ENCODE measurements at regions of chr12 and their contacts with region 1.

Region 1: GRCh38 chr12:89756585-89757321 is 48.1 kb upstream of the ATP2B1 start:
- DNase-seq: peak; percentile 69
- ATAC-seq: peak; percentile 78
- H3K4me3 ChIP-seq: no peak overlapping the region
- H3K4me3 Mint-ChIP-seq: peak overlapping the region; percentile 33
- H3K27ac ChIP-seq: peak overlapping the region; percentile 14 to 67
- H3K27ac Mint-ChIP-seq: peak overlapping the region; percentile 92
- H3K4me1 ChIP-seq: peaks cover 44 to 47% of the 10 kb centered on the region in 2 donors
- H3K4me1 Mint-ChIP-seq: peaks cover 55% of the 10 kb centered on the region
- H3K27me3 ChIP-seq: no peaks in the 10 kb centered on the region
- H3K27me3 Mint-ChIP-seq: no peaks in the 10 kb centered on the region
- CTCF ChIP-seq: no peak

Region 2: GRCh38 chr12:89352492-89353187 is 404.1 kb before region 1 on chr12 and contains the start of gene DUSP6:
- CTCF ChIA-PET with region 1: no interaction called
- POLR2A ChIA-PET with region 1: no interaction called
- intact Hi-C with region 1: loop called (anchors 5 kb)
- DNase-seq: peak; percentile 88
- ATAC-seq: peak; percentile 64
- H3K4me3 ChIP-seq: peak within 1 kb of the TSS; percentile 63 to 94 (median 78)
- H3K4me3 Mint-ChIP-seq: peak within 1 kb of the TSS; percentile 97
- H3K27ac ChIP-seq: peak within 1 kb of the TSS; percentile 82 to 87
- H3K27ac Mint-ChIP-seq: peak within 1 kb of the TSS; percentile 96
- H3K4me1 ChIP-seq: peaks cover 44 to 52% of the 10 kb centered on the region in 2 donors
- H3K4me1 Mint-ChIP-seq: peaks cover 68% of the 10 kb centered on the region
- H3K27me3 ChIP-seq: no peaks in the 10 kb centered on the region
- H3K27me3 Mint-ChIP-seq: no peaks in the 10 kb centered on the region
- CTCF ChIP-seq: no peak
- total RNA-seq, gene DUSP6: 1.6 and 3.2 TPM in 2 replicates

Region 3: GRCh38 chr12:89671469-89671868 is 85.3 kb before region 1 on chr12:
- CTCF ChIA-PET with region 1: no interaction called
- POLR2A ChIA-PET with region 1: no interaction called
- intact Hi-C with region 1: no loop called
- DNase-seq: no peak
- ATAC-seq: no peak
- H3K4me3 ChIP-seq: no peak overlapping the region
- H3K4me3 Mint-ChIP-seq: peak overlapping the region; percentile 18
- H3K27ac ChIP-seq: peak overlapping the region in 1 of 2 donors; percentile 50
- H3K27ac Mint-ChIP-seq: peak overlapping the region; percentile 47
- H3K4me1 ChIP-seq: peaks cover 38 to 80% of the 10 kb centered on the region in 2 donors
- H3K4me1 Mint-ChIP-seq: peaks cover 87% of the 10 kb centered on the region
- H3K27me3 ChIP-seq: no peaks in the 10 kb centered on the region
- H3K27me3 Mint-ChIP-seq: no peaks in the 10 kb centered on the region
- CTCF ChIP-seq: no peak

Region 4: DNA sequence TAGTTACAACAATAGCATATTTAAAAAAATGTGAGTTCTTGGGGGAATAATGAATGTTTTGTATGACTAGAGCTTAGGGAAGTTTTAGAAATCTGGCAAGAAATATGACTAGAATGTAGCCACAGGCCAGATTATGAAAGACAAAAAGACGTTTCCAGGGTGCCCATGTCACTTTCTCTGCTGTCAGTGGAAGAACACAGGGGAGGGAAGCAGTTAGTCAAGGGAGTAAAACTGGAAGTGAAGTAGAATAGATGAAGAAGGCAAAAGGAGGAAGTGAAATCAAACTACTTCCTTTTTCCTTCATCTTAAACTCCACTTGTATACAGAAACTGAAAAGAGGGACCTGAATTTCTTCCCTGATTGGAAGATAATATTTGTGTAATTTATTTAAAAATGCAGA is 33.1 kb after region 1 on chr12:
- CTCF ChIA-PET with region 1: no interaction called
- POLR2A ChIA-PET with region 1: no interaction called
- intact Hi-C with region 1: loop called (anchors 2 kb)
- DNase-seq: peak; percentile 83
- ATAC-seq: peak; percentile 95
- H3K4me3 ChIP-seq: no peak overlapping the region
- H3K4me3 Mint-ChIP-seq: peak overlapping the region; percentile 62
- H3K27ac ChIP-seq: peak overlapping the region; percentile 32 to 58
- H3K27ac Mint-ChIP-seq: peak overlapping the region; percentile 81
- H3K4me1 ChIP-seq: peaks cover 11% of the 10 kb centered on the region in 2 donors
- H3K4me1 Mint-ChIP-seq: peaks cover 27% of the 10 kb centered on the region
- H3K27me3 ChIP-seq: no peaks in the 10 kb centered on the region
- H3K27me3 Mint-ChIP-seq: no peaks in the 10 kb centered on the region
- CTCF ChIP-seq: no peak

Region 5: GRCh38 chr12:89862511-89863179 is 105.9 kb after region 1 on chr12:
- CTCF ChIA-PET with region 1: no interaction called
- POLR2A ChIA-PET with region 1: no interaction called
- intact Hi-C with region 1: loop called (anchors 1 kb)
- DNase-seq: peak; percentile 88
- ATAC-seq: peak; percentile 68
- H3K4me3 ChIP-seq: peak overlapping the region; percentile 23 to 65 (median 44)
- H3K4me3 Mint-ChIP-seq: peak overlapping the region; percentile 86
- H3K27ac ChIP-seq: peak overlapping the region; percentile 92 to 96
- H3K27ac Mint-ChIP-seq: peak overlapping the region; percentile 98
- H3K4me1 ChIP-seq: peaks cover 58 to 65% of the 10 kb centered on the region in 2 donors
- H3K4me1 Mint-ChIP-seq: peaks cover 68% of the 10 kb centered on the region
- H3K27me3 ChIP-seq: no peaks in the 10 kb centered on the region
- H3K27me3 Mint-ChIP-seq: no peaks in the 10 kb centered on the region
- CTCF ChIP-seq: no peak

Region 6: DNA sequence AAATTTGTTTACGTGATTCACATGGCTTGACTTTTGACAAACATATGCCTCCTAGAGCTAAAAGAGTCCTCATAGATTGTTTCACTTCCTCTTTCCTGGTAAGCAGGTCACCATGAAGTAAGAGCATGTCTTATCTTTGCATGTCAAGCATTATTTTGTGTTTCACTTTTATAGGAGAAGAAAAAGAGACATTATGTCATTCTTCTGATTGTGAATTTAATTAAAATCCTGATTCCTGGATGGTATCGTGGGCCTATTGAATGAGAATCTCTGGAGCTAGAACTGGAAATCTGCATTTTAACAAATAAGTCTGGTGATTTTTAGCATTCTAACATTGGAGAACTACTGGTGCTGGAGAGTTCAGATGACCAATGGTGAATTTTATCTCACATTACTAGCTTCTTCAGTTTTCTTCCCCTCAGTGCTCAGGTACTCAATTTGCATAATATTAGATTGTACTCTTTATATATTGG is 170.5 kb after region 1 on chr12:
- CTCF ChIA-PET with region 1: no interaction called
- POLR2A ChIA-PET with region 1: no interaction called
- intact Hi-C with region 1: loop called (anchors 2 kb)
- DNase-seq: peak; percentile 89
- ATAC-seq: peak; percentile 88
- H3K4me3 ChIP-seq: peak overlapping the region; percentile 46 to 83 (median 60)
- H3K4me3 Mint-ChIP-seq: peak overlapping the region; percentile 95
- H3K27ac ChIP-seq: peak overlapping the region; percentile 96 to 97
- H3K27ac Mint-ChIP-seq: peak overlapping the region; percentile 99
- H3K4me1 ChIP-seq: peaks cover 24 to 32% of the 10 kb centered on the region in 2 donors
- H3K4me1 Mint-ChIP-seq: peaks cover 52% of the 10 kb centered on the region
- H3K27me3 ChIP-seq: no peaks in the 10 kb centered on the region
- H3K27me3 Mint-ChIP-seq: no peaks in the 10 kb centered on the region
- CTCF ChIP-seq: no peak

Region 7: DNA sequence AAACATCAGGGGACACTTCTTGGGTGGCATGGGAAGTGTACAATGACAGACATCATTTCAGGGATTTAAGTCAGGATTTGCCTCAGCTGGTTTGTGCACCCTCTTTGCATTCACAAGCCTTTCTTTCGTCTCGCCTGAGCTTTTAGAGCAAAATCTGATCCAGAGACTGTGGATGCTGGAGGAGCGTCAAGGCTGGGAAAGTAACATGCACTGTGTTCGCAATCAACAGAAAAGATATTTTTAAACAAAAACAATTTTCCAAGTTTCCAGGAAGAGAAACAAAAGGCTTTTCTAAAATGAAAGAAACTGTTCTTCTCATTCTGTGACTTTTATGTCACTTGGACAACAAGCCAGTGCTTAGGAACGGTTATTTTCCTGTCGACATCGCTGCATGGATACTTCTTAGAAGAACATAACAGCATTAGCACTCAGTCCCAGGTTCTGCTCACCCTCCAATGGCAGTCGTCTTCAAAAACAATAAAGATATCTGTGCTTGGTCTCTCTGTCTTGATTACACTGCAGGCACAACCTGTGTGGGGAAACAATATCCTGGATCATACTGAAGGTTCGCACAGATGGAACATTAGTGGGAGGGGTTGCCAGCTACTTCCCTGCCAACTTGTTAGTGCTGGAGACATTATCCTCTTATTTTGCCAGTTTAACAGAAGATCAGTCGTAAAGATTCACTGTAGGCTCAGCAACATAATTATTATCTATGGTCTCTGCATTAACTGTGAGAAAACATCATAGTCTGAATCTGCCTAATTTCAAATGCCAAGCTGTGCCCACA is 355.2 kb after region 1 on chr12:
- CTCF ChIA-PET with region 1: no interaction called
- POLR2A ChIA-PET with region 1: no interaction called
- intact Hi-C with region 1: no loop called
- DNase-seq: no peak
- ATAC-seq: no peak
- H3K4me3 ChIP-seq: no peak overlapping the region
- H3K4me3 Mint-ChIP-seq: no peak overlapping the region
- H3K27ac ChIP-seq: no peak overlapping the region
- H3K27ac Mint-ChIP-seq: no peak overlapping the region
- H3K4me1 ChIP-seq: no peaks in the 10 kb centered on the region
- H3K4me1 Mint-ChIP-seq: no peaks in the 10 kb centered on the region
- H3K27me3 ChIP-seq: no peaks in the 10 kb centered on the region
- H3K27me3 Mint-ChIP-seq: no peaks in the 10 kb centered on the region
- CTCF ChIP-seq: no peak